ENCODE measurements at regions of chr2 and their contacts with region 1.

Region 1: GRCh38 chr2:3558205-3559014 is at the start of gene RNASEH1:
- DNase-seq: peak; percentile 99 to 100
- ATAC-seq: peak; percentile 95 to 100 (median 95)
- H3K4me3 ChIP-seq: peak within 1 kb of the TSS; percentile 97
- H3K4me3 Mint-ChIP-seq: peak within 1 kb of the TSS; percentile 90
- H3K27ac ChIP-seq: peak within 1 kb of the TSS; percentile 97
- H3K27ac Mint-ChIP-seq: peak within 1 kb of the TSS; percentile 91 to 98
- H3K4me1 ChIP-seq: peaks cover 14% of the 10 kb centered on the region
- H3K4me1 Mint-ChIP-seq: peaks cover 15 to 28% of the 10 kb centered on the region in 2 donors
- H3K27me3 ChIP-seq: no peaks in the 10 kb centered on the region
- H3K27me3 Mint-ChIP-seq: no peaks in the 10 kb centered on the region
- CTCF ChIP-seq: no peak
- total RNA-seq, gene RNASEH1: 25.6 to 30.6 (median 26.3) TPM

Region 2: GRCh38 chr2:3536682-3537632 is 21.5 kb before region 1 on chr2:
- intact Hi-C with region 1: no loop called
- DNase-seq: peak in 1 of 2 donors; percentile 41
- ATAC-seq: peak in 2 of 3 donors; percentile 62 to 70
- H3K4me3 ChIP-seq: peak overlapping the region; percentile 25
- H3K4me3 Mint-ChIP-seq: peak overlapping the region; percentile 93
- H3K27ac ChIP-seq: no peak overlapping the region
- H3K27ac Mint-ChIP-seq: peak overlapping the region; percentile 85 to 89
- H3K4me1 ChIP-seq: peaks cover 11% of the 10 kb centered on the region
- H3K4me1 Mint-ChIP-seq: peaks cover 6 to 15% of the 10 kb centered on the region in 2 donors
- H3K27me3 ChIP-seq: no peaks in the 10 kb centered on the region
- H3K27me3 Mint-ChIP-seq: no peaks in the 10 kb centered on the region
- CTCF ChIP-seq: no peak

Region 3: GRCh38 chr2:3575534-3576262 is 17.3 kb after region 1 on chr2:
- intact Hi-C with region 1: loop called (anchors 1 kb)
- DNase-seq: peak in 1 of 2 donors; percentile 61
- ATAC-seq: peak; percentile 29 to 60 (median 50)
- H3K4me3 ChIP-seq: peak overlapping the region; percentile 59
- H3K4me3 Mint-ChIP-seq: peak overlapping the region; percentile 91
- H3K27ac ChIP-seq: peak overlapping the region; percentile 78
- H3K27ac Mint-ChIP-seq: peak overlapping the region; percentile 91 to 93
- H3K4me1 ChIP-seq: peaks cover 18% of the 10 kb centered on the region
- H3K4me1 Mint-ChIP-seq: peaks cover 39 to 46% of the 10 kb centered on the region in 2 donors
- H3K27me3 ChIP-seq: no peaks in the 10 kb centered on the region
- H3K27me3 Mint-ChIP-seq: no peaks in the 10 kb centered on the region
- CTCF ChIP-seq: no peak

Measured in natural killer cell (primary cell).